ENCODE measurements at regions of chr17 and their contacts with region 1.

Region 1: GRCh38 chr17:21126645-21127510 is at the start of gene DHRS7B:
- DNase-seq: peak; percentile 95 to 98 (median 98)
- ATAC-seq: peak; percentile 92 to 97 (median 97)
- H3K4me3 ChIP-seq: peak within 1 kb of the TSS; percentile 58 to 95 (median 72)
- H3K27ac ChIP-seq: peak within 1 kb of the TSS; percentile 51 to 96 (median 88)
- H3K4me1 ChIP-seq: peaks cover 3 to 65% (median 19%) of the 10 kb centered on the region in 12 donors
- H3K27me3 ChIP-seq: no peaks in the 10 kb centered on the region
- CTCF ChIP-seq: peak in 2 of 12 donors; percentile 10 to 16
- POLR2A ChIP-seq: peak in 1 of 2 donors; percentile 68
- total RNA-seq, gene DHRS7B: 20.2 to 45.2 (median 34.7) TPM

Region 2: GRCh38 chr17:21072745-21073197 is 54.1 kb before region 1 on chr17:
- intact Hi-C with region 1: no loop called
- DNase-seq: no peak
- ATAC-seq: no peak
- H3K4me3 ChIP-seq: no peak overlapping the region
- H3K27ac ChIP-seq: no peak overlapping the region
- H3K4me1 ChIP-seq: peaks cover 0 to 14% (median 0%) of the 10 kb centered on the region in 12 donors
- H3K27me3 ChIP-seq: no peaks in the 10 kb centered on the region
- CTCF ChIP-seq: no peak
- POLR2A ChIP-seq: no peak

Region 3: DNA sequence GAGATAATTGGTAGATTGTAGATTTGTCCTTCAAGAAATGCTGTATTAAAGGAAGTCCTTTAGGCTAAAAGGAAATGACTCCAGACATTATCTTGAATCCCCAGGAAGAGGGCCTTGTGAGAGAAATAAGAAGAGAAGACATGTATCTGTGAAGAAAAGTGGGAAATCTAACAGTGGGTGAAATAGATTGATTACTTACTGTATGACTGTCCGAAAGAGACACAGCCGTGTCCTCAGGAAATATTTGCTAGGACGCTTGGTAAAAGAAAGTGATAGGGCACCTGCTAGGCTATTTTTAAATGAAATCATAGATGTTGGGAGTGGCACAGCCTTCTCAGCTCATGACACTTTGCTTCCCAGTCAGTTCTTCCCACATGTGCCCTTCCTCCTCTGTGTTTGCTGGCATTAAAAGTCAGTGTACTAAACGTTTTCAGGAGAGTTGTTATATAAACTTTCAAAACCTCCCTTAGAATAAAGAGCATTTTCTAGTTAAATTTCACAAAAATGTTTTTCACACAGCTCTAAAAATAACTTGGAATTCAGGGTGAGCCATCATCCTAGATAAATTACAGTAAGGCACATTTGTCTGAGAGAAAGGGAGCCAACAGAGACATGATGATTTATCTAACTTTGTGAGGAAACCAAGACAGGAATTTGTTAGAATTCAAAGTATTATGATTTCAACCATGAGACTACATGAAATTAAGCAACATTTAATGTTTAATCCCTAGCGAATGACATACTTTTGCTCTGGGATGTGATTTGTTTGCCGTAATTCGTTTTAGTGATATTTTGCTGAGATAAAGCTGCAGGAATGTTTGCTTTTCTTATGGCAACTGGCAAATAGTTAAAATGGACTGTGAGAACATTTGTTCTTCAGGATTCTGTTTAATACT is 34.9 kb after region 1 on chr17:
- intact Hi-C with region 1: loop called in 1 of 10 experiments (anchors 5 kb)
- DNase-seq: no peak
- ATAC-seq: peak in 3 of 4 donors; percentile 38 to 52 (median 47)
- H3K4me3 ChIP-seq: peak overlapping the region in 1 of 12 donors; percentile 8
- H3K27ac ChIP-seq: peak overlapping the region; percentile 17 to 83 (median 64)
- H3K4me1 ChIP-seq: peaks cover 4 to 44% (median 26%) of the 10 kb centered on the region in 12 donors
- H3K27me3 ChIP-seq: no peaks in the 10 kb centered on the region
- CTCF ChIP-seq: no peak
- POLR2A ChIP-seq: no peak

Region 4: DNA sequence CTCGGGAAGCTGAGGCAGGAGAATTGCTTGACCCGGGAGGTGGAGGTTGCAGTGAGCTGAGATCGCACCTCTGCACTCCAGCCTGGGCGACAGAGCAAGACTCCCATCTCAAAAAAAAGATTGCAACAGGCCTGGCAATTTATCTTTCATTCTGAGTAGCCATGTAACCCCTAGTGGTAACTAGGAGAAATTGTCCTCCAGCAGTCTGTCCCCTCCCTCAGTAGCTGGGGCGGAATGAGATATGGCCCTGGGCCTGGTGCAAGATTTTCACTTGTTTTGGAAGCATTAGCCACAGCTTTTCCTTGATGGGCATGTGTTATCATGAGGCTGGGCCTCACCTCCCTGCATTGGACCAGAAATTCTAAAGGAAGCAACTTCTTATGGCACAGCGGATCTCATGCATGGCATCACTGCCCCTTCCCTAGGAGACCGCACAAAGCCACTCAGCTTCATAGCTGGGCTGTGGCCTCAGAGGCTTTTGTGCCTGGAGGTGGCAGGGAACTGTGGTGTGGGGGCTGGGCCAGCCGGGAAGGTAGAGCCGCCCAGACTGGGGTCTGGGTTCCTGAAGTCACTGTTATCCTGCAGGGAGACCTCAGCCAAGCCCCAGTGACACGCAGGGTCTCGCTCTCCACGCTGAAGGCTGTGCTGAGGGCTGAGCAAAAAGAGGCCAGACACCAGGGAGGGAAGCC is 112.9 kb after region 1 on chr17:
- intact Hi-C with region 1: loop called in 4 of 10 experiments (anchors 10 kb)
- DNase-seq: peak in 1 of 5 donors; percentile 44
- ATAC-seq: peak in 1 of 4 donors; percentile 7
- H3K4me3 ChIP-seq: no peak overlapping the region
- H3K27ac ChIP-seq: no peak overlapping the region
- H3K4me1 ChIP-seq: peaks cover 0 to 27% (median 14%) of the 10 kb centered on the region in 12 donors
- H3K27me3 ChIP-seq: no peaks in the 10 kb centered on the region
- CTCF ChIP-seq: peak; percentile 16 to 57 (median 34)
- POLR2A ChIP-seq: no peak

Region 5: GRCh38 chr17:21275579-21276263 is 148.8 kb after region 1 on chr17:
- intact Hi-C with region 1: loop called in 7 of 10 experiments (anchors 2 to 10 kb)
- DNase-seq: peak; percentile 95 to 98 (median 96)
- ATAC-seq: peak; percentile 94 to 98 (median 97)
- H3K4me3 ChIP-seq: peak overlapping the region; percentile 40 to 81 (median 64)
- H3K27ac ChIP-seq: peak overlapping the region; percentile 14 to 87 (median 74)
- H3K4me1 ChIP-seq: peaks cover 0 to 36% (median 16%) of the 10 kb centered on the region in 12 donors
- H3K27me3 ChIP-seq: no peaks in the 10 kb centered on the region
- CTCF ChIP-seq: peak in 3 of 12 donors; percentile 8 to 10 (median 9)
- POLR2A ChIP-seq: peak in 1 of 2 donors; percentile 60

Region 6: GRCh38 chr17:21445091-21445650 is 318.3 kb after region 1 on chr17:
- intact Hi-C with region 1: loop called in 7 of 10 experiments (anchors 5 to 10 kb)
- DNase-seq: no peak
- ATAC-seq: no peak
- H3K4me3 ChIP-seq: no peak overlapping the region
- H3K27ac ChIP-seq: no peak overlapping the region
- H3K4me1 ChIP-seq: no peaks in the 10 kb centered on the region
- H3K27me3 ChIP-seq: no peaks in the 10 kb centered on the region
- CTCF ChIP-seq: no peak
- POLR2A ChIP-seq: no peak

Region 7: DNA sequence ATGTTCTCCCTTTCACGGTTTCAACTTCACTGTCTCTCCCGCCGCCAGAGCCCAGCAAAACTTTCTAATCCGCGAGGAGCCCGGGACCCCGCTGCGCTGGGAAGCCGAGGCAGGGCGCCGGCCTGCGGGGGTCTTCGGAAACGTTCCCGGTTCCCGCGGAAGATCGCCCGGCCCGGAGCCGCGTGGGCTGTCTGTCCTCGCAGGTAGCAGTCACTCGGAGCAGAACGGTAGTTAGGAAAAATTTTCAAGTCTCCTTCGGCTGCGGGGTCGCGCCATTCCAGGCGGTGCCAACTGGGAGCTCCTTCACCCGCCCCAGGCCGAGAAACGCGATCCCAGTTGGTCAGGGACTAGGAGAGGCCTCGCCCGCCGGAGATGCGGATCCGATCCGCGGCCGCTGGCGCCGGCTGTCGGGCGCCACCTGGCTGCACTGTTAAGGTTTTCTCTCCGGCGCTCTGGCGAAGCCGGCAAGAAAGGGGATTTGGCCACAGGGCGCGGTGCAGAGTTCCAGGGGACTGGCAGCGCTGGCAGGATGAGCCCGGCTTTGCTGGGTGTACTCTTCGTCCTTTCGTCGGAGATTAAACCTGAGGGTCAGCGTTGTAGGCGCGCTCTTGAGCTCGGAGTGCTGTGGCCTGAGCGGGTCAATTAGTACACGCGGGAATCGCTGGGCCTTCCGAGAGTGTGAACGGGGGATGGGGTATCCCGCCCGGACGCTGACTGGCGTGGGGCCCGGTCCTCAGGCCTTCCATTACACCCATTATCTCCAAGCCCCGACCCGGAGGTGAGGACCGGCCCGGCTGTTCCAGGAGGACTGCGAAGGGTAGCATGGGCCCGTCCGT is 384.7 kb after region 1 on chr17:
- intact Hi-C with region 1: loop called in 4 of 10 experiments (anchors 2 to 5 kb)
- DNase-seq: peak; percentile 83 to 92 (median 85)
- ATAC-seq: peak; percentile 87 to 98 (median 94)
- H3K4me3 ChIP-seq: peak overlapping the region; percentile 22 to 82 (median 63)
- H3K27ac ChIP-seq: peak overlapping the region in 9 of 12 donors; percentile 10 to 75 (median 63)
- H3K4me1 ChIP-seq: peaks cover 0 to 21% (median 11%) of the 10 kb centered on the region in 12 donors
- H3K27me3 ChIP-seq: peaks cover 0 to 4% (median 0%) of the 10 kb centered on the region in 9 donors
- CTCF ChIP-seq: peak; percentile 62 to 91 (median 84)
- POLR2A ChIP-seq: no peak